IMR-90 (cell line): ENCODE measurements at regions of chr19 and their contacts with region 1.

Region 1: GRCh38 chr19:51777570-51778462 is 16.8 kb downstream of the FPR2 start:
- DNase-seq: peak; percentile 80
- ATAC-seq: peak; percentile 99
- H3K4me3 ChIP-seq: no peak overlapping the region
- H3K27ac ChIP-seq: no peak overlapping the region
- H3K4me1 ChIP-seq: no peaks in the 10 kb centered on the region
- H3K27me3 ChIP-seq: peaks cover 2% of the 10 kb centered on the region; the same call in 1 of the 2 replicates
- CTCF ChIP-seq: peak; percentile 82
- POLR2A ChIP-seq: no peak
- RAD21 ChIP-seq: peak; percentile 79

Region 2: GRCh38 chr19:51422053-51422448 is 355.8 kb before region 1 on chr19:
- CTCF ChIA-PET with region 1: interaction called, 5 read pairs
- POLR2A ChIA-PET with region 1: no interaction called
- dilution Hi-C with region 1: no loop called
- in situ Hi-C with region 1: no loop called
- intact Hi-C with region 1: loop called (anchors 2 kb)
- DNase-seq: peak; percentile 59
- ATAC-seq: peak; percentile 100
- H3K4me3 ChIP-seq: no peak overlapping the region
- H3K27ac ChIP-seq: no peak overlapping the region
- H3K4me1 ChIP-seq: no peaks in the 10 kb centered on the region
- H3K27me3 ChIP-seq: no peaks in the 10 kb centered on the region
- CTCF ChIP-seq: peak; percentile 94
- POLR2A ChIP-seq: no peak
- RAD21 ChIP-seq: peak; percentile 76

Region 3: DNA sequence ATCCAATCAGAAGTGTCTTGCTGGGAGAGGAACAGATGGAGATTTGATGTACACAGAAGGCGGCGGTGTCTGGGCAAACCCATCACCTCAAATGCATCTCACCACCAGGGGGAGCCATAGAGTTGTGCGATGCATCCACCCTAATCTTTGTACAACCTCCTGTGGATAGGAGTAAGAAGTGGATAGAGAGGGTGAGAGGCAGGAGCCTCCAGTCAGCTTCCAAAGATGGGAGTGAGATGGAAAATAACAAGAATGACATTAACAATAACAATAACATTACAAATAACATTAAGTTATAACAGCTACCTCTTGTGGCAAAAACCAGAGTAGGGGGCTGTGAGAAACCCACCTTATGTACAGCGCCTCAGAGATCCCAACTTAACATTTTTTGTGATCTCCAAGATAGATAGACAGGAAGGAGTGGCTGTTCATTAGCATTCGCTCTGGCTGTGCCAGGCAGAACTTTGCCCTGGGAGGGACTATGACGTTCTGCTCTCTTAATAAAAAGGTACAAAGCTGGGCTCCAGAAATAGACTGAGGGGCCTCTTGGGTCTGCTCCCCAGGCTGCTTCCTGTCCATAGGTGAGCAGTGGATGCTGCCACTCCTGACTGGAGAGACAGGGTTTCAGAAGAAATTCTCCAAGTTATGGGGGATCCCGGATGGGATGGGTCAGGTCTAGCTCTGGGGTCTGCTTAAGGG is 304.7 kb before region 1 on chr19:
- CTCF ChIA-PET with region 1: interaction called, 6 read pairs
- POLR2A ChIA-PET with region 1: no interaction called
- dilution Hi-C with region 1: no loop called
- in situ Hi-C with region 1: no loop called
- intact Hi-C with region 1: loop called (anchors 1 kb)
- DNase-seq: peak; percentile 59
- ATAC-seq: peak; percentile 88
- H3K4me3 ChIP-seq: no peak overlapping the region
- H3K27ac ChIP-seq: no peak overlapping the region
- H3K4me1 ChIP-seq: no peaks in the 10 kb centered on the region
- H3K27me3 ChIP-seq: no peaks in the 10 kb centered on the region
- CTCF ChIP-seq: peak; percentile 69
- POLR2A ChIP-seq: no peak
- RAD21 ChIP-seq: peak; percentile 75

Region 4: DNA sequence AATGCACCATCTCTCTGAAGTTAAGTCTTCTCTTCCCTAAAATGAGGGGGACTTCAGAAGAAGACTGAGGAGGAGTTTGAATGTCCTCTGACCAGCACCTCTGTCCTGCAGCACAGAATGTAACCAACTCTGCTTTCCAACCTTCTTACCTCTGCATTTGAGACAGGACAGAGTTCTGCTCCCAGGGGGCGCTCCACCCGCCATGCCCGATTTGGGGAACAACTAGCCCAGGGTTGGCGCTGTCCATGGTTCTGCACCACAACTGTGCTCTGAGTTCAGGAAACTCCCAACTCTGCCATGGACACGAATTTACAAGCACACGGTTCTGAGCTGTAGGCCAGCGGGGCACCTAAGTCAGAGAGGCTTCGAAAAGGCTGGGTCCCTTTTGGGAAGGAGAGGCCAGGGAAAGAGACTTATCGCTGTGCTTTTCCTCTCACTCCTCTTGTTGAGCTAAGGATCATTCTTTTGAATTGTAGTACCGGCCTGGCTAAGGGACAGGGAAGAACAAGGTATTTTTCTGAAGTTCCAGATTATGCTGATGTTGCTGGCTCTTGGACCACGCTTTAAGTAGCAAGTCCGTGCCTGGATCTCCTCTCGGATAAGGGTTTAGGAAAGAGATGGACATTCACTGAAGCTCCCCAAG is 169.8 kb before region 1 on chr19:
- CTCF ChIA-PET with region 1: no interaction called
- POLR2A ChIA-PET with region 1: no interaction called
- dilution Hi-C with region 1: no loop called
- in situ Hi-C with region 1: no loop called
- intact Hi-C with region 1: loop called (anchors 1 kb)
- DNase-seq: peak; percentile 70
- ATAC-seq: peak; percentile 94
- H3K4me3 ChIP-seq: no peak overlapping the region
- H3K27ac ChIP-seq: no peak overlapping the region
- H3K4me1 ChIP-seq: no peaks in the 10 kb centered on the region
- H3K27me3 ChIP-seq: no peaks in the 10 kb centered on the region
- CTCF ChIP-seq: peak; percentile 76
- POLR2A ChIP-seq: no peak
- RAD21 ChIP-seq: peak; percentile 47